Motor neuron (in vitro differentiated cells): ENCODE measurements at regions of chr3 and their contacts with region 1.

Region 1: GRCh38 chr3:121855555-121855954 is 20.5 kb downstream of the EAF2 start:
- ATAC-seq: no peak
- H3K4me3 ChIP-seq: no peak overlapping the region
- H3K27ac ChIP-seq: no peak overlapping the region
- H3K4me1 ChIP-seq: no peaks in the 10 kb centered on the region

Region 2: GRCh38 chr3:122092460-122093165 is 237.1 kb after region 1 on chr3:
- in situ Hi-C with region 1: loop called in 1 of 9 experiments (anchors 25 kb)
- ATAC-seq: peak in 3 of 8 experiments; percentile 1 to 47 (median 34)
- H3K4me3 ChIP-seq: no peak overlapping the region
- H3K27ac ChIP-seq: no peak overlapping the region
- H3K4me1 ChIP-seq: peaks cover 8 to 13% of the 10 kb centered on the region in 2 donors